ENCODE measurements at regions of chr15 and their contacts with region 1.

Region 1: DNA sequence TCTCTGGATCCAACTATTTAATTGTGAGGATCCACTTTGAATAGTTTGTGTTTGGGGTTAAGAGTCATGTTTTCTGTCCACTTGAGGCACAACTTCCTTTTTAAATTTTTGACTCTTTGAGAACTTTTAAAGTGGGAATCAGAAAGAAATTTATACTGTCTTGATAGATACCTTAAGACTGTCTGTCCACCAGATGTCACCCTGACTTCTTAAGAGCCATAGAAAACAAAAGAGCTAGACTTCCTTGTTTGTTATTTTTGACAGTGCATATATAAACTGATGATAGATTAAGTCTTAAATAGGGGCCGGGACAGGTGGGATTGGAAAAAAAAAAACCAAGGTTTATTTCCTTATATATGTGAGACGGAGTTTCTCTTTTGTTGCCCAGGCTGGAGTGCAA is 52.1 kb upstream of the WDR72 start:
- DNase-seq: no peak
- H3K4me3 ChIP-seq: no peak overlapping the region
- H3K27ac ChIP-seq: no peak overlapping the region
- H3K4me1 ChIP-seq: no peaks in the 10 kb centered on the region
- H3K27me3 ChIP-seq: no peaks in the 10 kb centered on the region
- CTCF ChIP-seq: peak; percentile 36

Region 2: DNA sequence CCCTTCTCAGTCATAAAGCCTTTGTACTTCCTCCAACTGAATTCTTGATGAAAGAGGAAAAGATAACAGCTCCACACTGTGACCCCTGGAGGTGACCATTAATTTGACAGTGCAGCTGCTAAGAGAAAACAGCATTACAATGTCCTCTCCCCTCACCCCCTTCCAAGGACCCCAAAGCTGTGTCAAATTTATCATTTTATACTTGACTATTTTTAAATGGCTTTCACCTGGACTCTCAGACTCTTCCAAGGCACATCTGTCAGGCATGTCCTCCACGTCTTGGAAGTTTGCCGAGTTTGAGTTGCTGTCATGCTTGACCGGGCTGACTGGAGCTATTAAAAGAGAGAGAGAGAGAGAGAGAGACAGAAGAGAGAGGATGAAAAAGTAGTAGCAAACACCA is 288.5 kb before region 1 on chr15:
- intact Hi-C with region 1: no loop called
- DNase-seq: no peak
- H3K4me3 ChIP-seq: no peak overlapping the region
- H3K27ac ChIP-seq: no peak overlapping the region
- H3K4me1 ChIP-seq: no peaks in the 10 kb centered on the region
- H3K27me3 ChIP-seq: no peaks in the 10 kb centered on the region
- CTCF ChIP-seq: no peak

Region 3: GRCh38 chr15:53962332-53963241 is 151.1 kb after region 1 on chr15:
- intact Hi-C with region 1: loop called (anchors 10 kb)
- DNase-seq: peak; percentile 24
- H3K4me3 ChIP-seq: no peak overlapping the region
- H3K27ac ChIP-seq: no peak overlapping the region
- H3K4me1 ChIP-seq: no peaks in the 10 kb centered on the region
- H3K27me3 ChIP-seq: no peaks in the 10 kb centered on the region
- CTCF ChIP-seq: peak; percentile 36

Measured in colonic mucosa (tissue), 4 donors.